ENCODE measurements at regions of chr7 and their contacts with region 1.

Region 1: DNA sequence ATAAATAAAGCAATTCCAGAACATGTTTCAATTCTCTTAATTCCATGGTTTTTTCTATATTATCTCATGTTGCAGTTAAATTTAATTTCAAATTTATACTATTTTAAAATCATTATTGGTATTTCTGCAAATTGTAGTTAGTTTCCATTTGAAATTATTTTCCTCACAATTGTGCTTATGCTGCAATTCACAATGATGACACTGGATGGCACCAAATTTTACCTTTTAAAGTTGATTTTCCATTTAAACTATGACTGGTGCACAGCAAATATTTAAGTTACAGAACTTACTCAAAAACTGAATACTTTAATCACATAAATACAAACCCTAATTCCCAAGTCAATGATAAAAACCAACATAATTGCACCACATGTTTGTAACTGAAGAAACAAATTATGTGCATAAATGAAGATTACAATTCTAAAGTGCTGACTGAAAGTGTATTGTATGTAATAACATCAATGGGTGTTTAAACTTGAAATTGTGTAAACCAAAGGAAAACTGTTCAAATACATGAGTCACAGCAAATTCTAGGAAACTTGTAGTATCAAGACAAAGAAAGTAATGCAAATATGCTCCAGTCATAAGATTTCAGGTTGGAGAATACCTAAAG is 75.3 kb upstream of the AASS start:
- DNase-seq: no peak
- H3K4me3 Mint-ChIP-seq: no peak overlapping the region
- H3K27ac Mint-ChIP-seq: no peak overlapping the region
- H3K4me1 Mint-ChIP-seq: no peaks in the 10 kb centered on the region
- H3K27me3 Mint-ChIP-seq: no peaks in the 10 kb centered on the region

Region 2: GRCh38 chr7:122528879-122529481 is 309.6 kb after region 1 on chr7:
- CTCF ChIA-PET with region 1: interaction called, 5 read pairs
- POLR2A ChIA-PET with region 1: no interaction called
- intact Hi-C with region 1: loop called (anchors 2 kb)
- DNase-seq: no peak
- H3K4me3 Mint-ChIP-seq: no peak overlapping the region
- H3K27ac Mint-ChIP-seq: no peak overlapping the region
- H3K4me1 Mint-ChIP-seq: no peaks in the 10 kb centered on the region
- H3K27me3 Mint-ChIP-seq: no peaks in the 10 kb centered on the region

Region 3: DNA sequence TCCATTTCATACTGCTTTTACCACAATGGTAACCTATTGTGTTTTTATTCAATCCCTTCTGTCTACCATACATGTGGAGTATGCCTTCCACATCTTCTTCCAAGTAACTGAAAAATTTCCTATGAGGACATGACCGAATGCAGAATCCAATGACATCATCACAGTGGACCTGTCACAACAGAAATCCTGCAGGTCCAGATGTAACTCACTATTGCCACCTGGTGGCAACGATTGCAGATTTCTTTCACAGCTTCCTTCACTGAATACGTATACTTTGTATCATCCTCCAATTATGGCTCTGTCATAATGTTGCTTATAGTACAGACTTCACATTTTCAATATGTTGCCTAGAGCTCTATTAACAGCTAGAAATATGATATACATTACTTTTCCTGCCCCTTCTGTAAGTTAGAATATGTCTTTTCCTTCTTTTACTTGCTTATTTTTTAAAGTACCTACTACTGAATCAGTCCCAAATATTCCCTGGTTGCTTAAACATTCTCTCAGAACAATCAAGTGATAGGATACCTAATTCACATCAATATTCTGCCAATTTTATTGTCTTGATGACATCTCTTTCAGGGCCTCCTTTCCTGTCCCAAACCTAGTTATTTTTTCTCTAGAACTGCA is 935.0 kb after region 1 on chr7:
- CTCF ChIA-PET with region 1: no interaction called
- POLR2A ChIA-PET with region 1: no interaction called
- intact Hi-C with region 1: loop called (anchors 2 kb)
- DNase-seq: peak; percentile 56
- H3K4me3 Mint-ChIP-seq: no peak overlapping the region
- H3K27ac Mint-ChIP-seq: no peak overlapping the region
- H3K4me1 Mint-ChIP-seq: no peaks in the 10 kb centered on the region
- H3K27me3 Mint-ChIP-seq: no peaks in the 10 kb centered on the region